ENCODE measurements at regions of chr2 and their contacts with region 1.

Region 1: DNA sequence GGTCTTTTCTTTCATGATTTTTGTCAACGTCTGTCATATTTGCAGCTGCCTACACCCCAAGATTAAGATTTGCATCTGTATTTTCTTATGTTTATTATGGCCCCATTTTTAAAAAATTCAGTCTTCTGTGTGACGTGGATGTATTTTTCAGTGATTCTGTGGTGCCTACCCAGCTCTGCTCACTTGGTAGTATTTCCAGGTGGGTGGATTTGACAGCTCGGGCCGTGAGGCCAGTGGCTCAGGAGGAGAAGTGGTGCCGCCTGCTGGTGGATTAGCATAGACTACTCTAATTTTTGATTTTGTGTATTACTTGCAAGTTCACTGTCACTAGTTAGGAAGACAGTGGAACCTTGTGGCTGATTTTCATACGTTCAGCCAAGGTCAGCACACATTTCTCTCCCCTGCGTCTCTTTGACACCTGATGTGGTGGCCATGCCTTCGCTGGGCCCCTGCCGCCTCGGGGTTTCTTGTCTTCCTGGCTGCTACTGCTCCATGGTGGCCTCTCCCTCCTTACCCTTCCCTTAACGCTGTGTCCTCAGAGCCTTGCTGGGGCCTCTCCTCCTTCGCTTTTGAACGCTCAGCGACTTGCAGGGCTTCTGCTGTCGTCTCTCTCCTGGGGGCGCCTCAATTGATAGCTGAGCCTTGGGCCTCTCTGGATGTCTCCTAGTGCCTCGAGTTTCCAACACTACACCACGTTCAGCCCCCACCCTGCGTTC is 89.3 kb downstream of the DGKD start:
- DNase-seq: peak; percentile 93
- H3K4me3 Mint-ChIP-seq: no peak overlapping the region
- H3K27ac Mint-ChIP-seq: no peak overlapping the region
- H3K4me1 Mint-ChIP-seq: peaks cover 12% of the 10 kb centered on the region
- H3K27me3 Mint-ChIP-seq: no peaks in the 10 kb centered on the region

Region 2: GRCh38 chr2:233267516-233268245 is 175.9 kb before region 1 on chr2:
- intact Hi-C with region 1: loop called (anchors 2 kb)
- DNase-seq: peak; percentile 95
- H3K4me3 Mint-ChIP-seq: peak overlapping the region; percentile 84
- H3K27ac Mint-ChIP-seq: peak overlapping the region; percentile 97
- H3K4me1 Mint-ChIP-seq: peaks cover 62% of the 10 kb centered on the region
- H3K27me3 Mint-ChIP-seq: no peaks in the 10 kb centered on the region

Region 3: GRCh38 chr2:233387667-233388528 is 55.7 kb before region 1 on chr2:
- intact Hi-C with region 1: no loop called
- DNase-seq: no peak
- H3K4me3 Mint-ChIP-seq: no peak overlapping the region
- H3K27ac Mint-ChIP-seq: no peak overlapping the region
- H3K4me1 Mint-ChIP-seq: peaks cover 33% of the 10 kb centered on the region
- H3K27me3 Mint-ChIP-seq: no peaks in the 10 kb centered on the region

Region 4: DNA sequence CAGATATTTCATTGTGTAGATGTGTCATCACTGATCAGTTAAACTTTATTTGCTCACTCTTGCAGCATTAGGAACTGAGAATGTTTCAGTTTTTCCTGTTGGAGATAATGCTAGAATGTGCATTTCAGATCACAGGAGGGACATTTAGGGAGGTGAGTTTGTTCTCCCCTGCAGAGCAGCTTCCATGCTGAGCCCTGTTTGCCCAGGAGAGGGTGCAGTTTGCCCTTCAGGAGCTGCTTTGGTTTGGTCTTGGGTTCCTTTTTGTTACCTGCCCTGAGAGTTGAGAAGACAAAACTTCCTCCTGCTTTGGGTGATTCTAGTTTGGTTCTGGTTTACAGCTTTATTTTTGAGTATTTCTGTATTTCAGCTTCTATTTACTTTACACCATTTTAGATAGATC is 39.4 kb before region 1 on chr2:
- intact Hi-C with region 1: loop called (anchors 1 kb)
- DNase-seq: peak; percentile 91
- H3K4me3 Mint-ChIP-seq: no peak overlapping the region
- H3K27ac Mint-ChIP-seq: peak overlapping the region; percentile 1
- H3K4me1 Mint-ChIP-seq: peaks cover 38% of the 10 kb centered on the region
- H3K27me3 Mint-ChIP-seq: no peaks in the 10 kb centered on the region

Region 5: GRCh38 chr2:233418761-233419625 is 24.6 kb before region 1 on chr2:
- intact Hi-C with region 1: loop called (anchors 2 kb)
- DNase-seq: peak; percentile 83
- H3K4me3 Mint-ChIP-seq: peak overlapping the region; percentile 82
- H3K27ac Mint-ChIP-seq: peak overlapping the region; percentile 83
- H3K4me1 Mint-ChIP-seq: peaks cover 87% of the 10 kb centered on the region
- H3K27me3 Mint-ChIP-seq: peaks cover 2% of the 10 kb centered on the region

Measured in activated CD4-positive, alpha-beta T cell treated with anti-CD3 and anti-CD28 coated beads, Interleukin-2, amount 10 ng/mL, durations not matched to agents 24 days and 14 days (primary cell).